ENCODE measurements at regions of chr2 and their contacts with region 1.

Region 1: DNA sequence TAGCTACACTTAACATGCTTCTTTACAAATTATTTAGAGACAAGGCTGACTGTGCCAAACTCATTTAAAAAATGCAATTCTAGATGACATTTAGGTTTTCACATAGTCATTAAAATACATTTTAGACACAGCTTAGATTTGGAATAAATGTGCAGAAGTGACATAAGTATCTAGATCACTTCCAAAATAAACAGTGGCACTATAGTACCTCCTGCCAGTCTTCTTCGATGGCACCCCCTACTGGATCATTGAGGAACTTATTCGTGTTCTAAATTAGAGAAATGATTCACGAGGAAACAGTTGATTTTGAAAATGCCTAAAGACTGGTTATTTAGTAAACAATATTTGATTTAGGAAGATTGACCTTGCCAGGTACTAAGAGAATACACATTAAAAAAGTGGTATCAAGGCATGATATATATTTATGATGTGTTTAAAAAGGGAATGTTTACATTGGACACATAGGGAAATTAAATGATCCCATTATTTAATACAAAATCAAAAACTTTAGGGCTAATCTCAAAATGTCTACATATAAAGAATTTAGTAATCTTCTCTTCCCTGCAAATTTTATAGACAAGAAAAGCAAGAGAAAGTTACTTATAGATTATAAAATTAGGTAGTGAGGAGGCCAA is 323.9 kb downstream of the XIRP2 start:
- DNase-seq: no peak
- H3K4me3 ChIP-seq: no peak overlapping the region
- H3K27ac ChIP-seq: no peak overlapping the region
- H3K4me1 ChIP-seq: no peaks in the 10 kb centered on the region; a peak in 1 of 7 replicates
- H3K27me3 ChIP-seq: no peaks in the 10 kb centered on the region
- CTCF ChIP-seq: peak in 2 of 3 experiments; percentile 61 to 65; a peak in 3 of 4 replicates
- EP300 ChIP-seq: no peak
- POLR2A ChIP-seq: no peak
- RAD21 ChIP-seq: peak; percentile 73 to 77

Region 2: GRCh38 chr2:167114026-167114425 is 98.1 kb before region 1 on chr2:
- CTCF ChIA-PET with region 1: interaction called, 11 read pairs
- POLR2A ChIA-PET with region 1: no interaction called
- DNase-seq: no peak
- H3K4me3 ChIP-seq: no peak overlapping the region
- H3K27ac ChIP-seq: no peak overlapping the region
- H3K4me1 ChIP-seq: no peaks in the 10 kb centered on the region
- H3K27me3 ChIP-seq: no peaks in the 10 kb centered on the region
- CTCF ChIP-seq: no peak
- EP300 ChIP-seq: no peak
- POLR2A ChIP-seq: no peak
- RAD21 ChIP-seq: no peak